Lower lobe of right lung (tissue), 2 donors: ENCODE measurements at regions of chr17 and their contacts with region 1.

Region 1: DNA sequence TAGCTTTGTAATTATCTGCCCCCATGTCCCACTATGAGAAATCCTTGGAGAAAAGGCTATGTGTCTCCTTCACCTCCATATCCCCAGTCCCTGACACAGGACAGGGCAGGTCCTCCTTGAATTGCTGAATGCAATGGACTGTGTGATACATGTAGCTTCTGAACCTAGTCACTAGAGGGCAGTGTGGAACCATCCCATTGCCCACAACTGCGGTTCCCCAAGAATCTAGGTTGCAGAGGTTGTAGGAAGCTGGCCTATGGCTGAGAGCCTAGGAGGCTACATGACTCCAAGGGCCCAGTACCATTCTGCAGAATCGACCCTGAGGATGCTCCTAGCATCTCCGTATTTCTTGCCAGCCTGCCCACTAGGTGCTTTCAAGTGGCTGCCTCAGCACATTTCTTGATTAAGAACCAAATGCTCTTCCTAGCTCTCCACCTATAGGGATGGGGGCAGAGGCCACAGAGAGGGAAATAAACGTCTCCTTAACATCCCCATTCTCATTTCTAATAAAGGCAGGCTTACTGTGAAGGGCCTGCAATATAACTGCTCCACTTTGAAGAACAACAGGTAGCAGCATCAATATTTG is 394.0 kb downstream of the CA10 start:
- DNase-seq: no peak
- ATAC-seq: peak; percentile 81 to 90
- H3K4me3 ChIP-seq: no peak overlapping the region
- H3K27ac ChIP-seq: no peak overlapping the region
- H3K4me1 ChIP-seq: no peaks in the 10 kb centered on the region
- H3K27me3 ChIP-seq: no peaks in the 10 kb centered on the region
- CTCF ChIP-seq: peak; percentile 79

Region 2: DNA sequence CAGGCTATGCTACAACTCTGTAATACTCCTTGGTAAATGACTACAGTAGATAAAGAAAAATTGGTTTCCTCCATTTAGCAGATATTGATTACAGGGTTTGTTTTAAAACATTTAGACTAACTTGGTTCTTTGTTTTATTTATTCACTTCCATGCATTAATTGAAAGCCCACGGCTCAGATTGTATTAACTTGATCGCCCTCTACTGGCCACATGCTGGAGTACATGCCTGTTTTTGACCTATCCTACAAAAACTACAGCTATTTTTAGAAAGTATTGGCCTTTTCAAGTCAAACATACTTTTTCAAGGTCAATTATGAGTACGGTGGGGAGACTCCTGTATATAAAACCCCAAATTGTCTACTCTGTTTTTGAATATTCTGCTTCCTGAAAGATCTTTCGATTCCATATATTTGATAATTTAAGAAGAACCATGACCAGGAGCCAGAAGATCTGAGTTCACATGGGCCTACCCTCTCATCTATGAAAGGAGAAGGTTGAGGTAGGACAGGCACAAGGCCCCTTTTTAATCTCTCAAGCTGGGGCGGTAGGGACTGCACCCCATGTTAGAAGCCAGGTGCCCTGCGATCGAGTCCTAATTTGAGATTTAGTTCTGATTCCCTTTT is 342.3 kb after region 1 on chr17:
- intact Hi-C with region 1: loop called (anchors 10 kb)
- DNase-seq: no peak
- ATAC-seq: no peak
- H3K4me3 ChIP-seq: no peak overlapping the region
- H3K27ac ChIP-seq: no peak overlapping the region
- H3K4me1 ChIP-seq: no peaks in the 10 kb centered on the region
- H3K27me3 ChIP-seq: no peaks in the 10 kb centered on the region
- CTCF ChIP-seq: peak; percentile 71